IMR-90 (cell line): ENCODE measurements at regions of chr13 and their contacts with region 1.

Region 1: DNA sequence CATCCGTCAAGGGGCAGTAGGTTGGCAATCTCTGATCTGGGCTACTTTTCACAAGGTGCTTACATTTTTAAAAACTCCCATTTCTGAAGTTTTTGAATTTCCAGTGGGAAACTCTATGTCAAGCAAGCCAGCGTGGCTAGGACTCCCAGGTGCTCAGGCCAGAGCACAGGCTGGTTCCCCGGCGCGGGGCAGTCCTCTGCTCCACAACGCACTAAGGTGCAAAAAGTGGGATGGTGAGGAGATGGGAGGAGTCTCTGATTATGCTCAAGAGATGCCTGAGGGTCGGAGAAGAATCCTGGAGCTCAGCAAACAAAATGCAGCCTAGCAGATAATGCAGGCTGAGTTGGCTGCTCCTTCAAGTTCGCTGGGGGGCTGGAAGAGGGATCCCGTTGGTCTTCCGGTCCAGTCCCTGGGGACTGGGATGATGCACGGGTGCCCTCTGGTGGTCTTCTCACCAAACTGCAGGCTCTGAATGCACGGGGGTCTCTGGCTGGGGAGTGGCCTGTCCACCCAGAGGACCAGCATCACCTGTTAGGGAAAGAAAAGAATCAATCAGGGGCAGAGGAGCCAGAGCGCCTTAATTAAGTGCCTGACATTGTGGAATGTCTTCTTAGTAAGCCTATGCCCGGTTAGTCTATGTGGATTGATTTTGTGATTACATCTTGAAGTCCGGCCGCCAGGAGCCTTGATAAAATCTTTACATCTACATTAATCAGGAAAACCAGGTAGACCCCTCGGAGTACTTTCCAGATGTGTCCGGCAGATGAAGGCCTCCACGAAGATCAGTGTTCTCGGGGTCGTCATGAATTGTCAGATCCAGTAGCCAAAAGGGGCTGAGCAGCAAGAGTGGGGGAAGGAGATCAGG is 244.4 kb upstream of the MAB21L1 start:
- DNase-seq: peak; percentile 46
- ATAC-seq: peak; percentile 87
- H3K4me3 ChIP-seq: no peak overlapping the region; the same call in 1 of the 2 replicates
- H3K27ac ChIP-seq: no peak overlapping the region
- H3K4me1 ChIP-seq: peaks cover 10% of the 10 kb centered on the region
- H3K27me3 ChIP-seq: no peaks in the 10 kb centered on the region
- CTCF ChIP-seq: peak; percentile 95
- POLR2A ChIP-seq: no peak
- RAD21 ChIP-seq: peak; percentile 97

Region 2: GRCh38 chr13:35164324-35164932 is 556.5 kb before region 1 on chr13:
- CTCF ChIA-PET with region 1: no interaction called
- POLR2A ChIA-PET with region 1: no interaction called
- dilution Hi-C with region 1: no loop called
- in situ Hi-C with region 1: no loop called
- intact Hi-C with region 1: loop called (anchors 1 kb)
- DNase-seq: peak; percentile 27
- ATAC-seq: peak; percentile 78
- H3K4me3 ChIP-seq: no peak overlapping the region
- H3K27ac ChIP-seq: no peak overlapping the region
- H3K4me1 ChIP-seq: no peaks in the 10 kb centered on the region
- H3K27me3 ChIP-seq: no peaks in the 10 kb centered on the region
- CTCF ChIP-seq: peak; percentile 61
- POLR2A ChIP-seq: 0 out of 2 replicates have a peak, but pooled peaks have one; percentile 17
- RAD21 ChIP-seq: peak; percentile 70

Region 3: DNA sequence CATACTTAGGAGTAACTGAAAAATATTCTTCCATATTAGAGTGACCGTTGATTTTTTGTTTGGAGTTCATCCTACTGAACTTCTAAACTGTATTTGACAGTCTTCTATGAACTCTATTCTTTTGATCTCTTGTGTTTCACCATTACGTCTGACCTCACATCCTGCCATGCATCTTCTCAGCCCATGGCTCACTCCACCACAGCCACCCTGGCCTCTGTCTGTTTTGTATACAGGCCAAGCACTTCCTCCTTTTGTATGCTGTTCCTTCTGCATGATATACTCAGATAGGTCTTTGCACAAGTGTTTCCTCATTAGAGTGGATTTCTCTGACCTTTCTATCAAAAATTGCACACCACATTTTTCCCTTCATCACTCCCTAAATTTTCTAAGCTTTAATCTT is 364.4 kb before region 1 on chr13:
- CTCF ChIA-PET with region 1: no interaction called
- POLR2A ChIA-PET with region 1: no interaction called
- dilution Hi-C with region 1: no loop called
- in situ Hi-C with region 1: no loop called
- intact Hi-C with region 1: no loop called
- DNase-seq: no peak
- ATAC-seq: no peak
- H3K4me3 ChIP-seq: no peak overlapping the region
- H3K27ac ChIP-seq: no peak overlapping the region
- H3K4me1 ChIP-seq: no peaks in the 10 kb centered on the region
- H3K27me3 ChIP-seq: no peaks in the 10 kb centered on the region
- CTCF ChIP-seq: no peak
- POLR2A ChIP-seq: no peak
- RAD21 ChIP-seq: no peak

Region 4: GRCh38 chr13:35460061-35460460 is 260.9 kb before region 1 on chr13:
- CTCF ChIA-PET with region 1: no interaction called
- POLR2A ChIA-PET with region 1: no interaction called
- dilution Hi-C with region 1: no loop called
- in situ Hi-C with region 1: no loop called
- intact Hi-C with region 1: no loop called
- DNase-seq: no peak
- ATAC-seq: no peak
- H3K4me3 ChIP-seq: no peak overlapping the region
- H3K27ac ChIP-seq: no peak overlapping the region
- H3K4me1 ChIP-seq: no peaks in the 10 kb centered on the region
- H3K27me3 ChIP-seq: no peaks in the 10 kb centered on the region
- CTCF ChIP-seq: no peak
- POLR2A ChIP-seq: no peak
- RAD21 ChIP-seq: no peak

Region 5: GRCh38 chr13:35475960-35476943 is 244.7 kb before region 1 on chr13 and contains the start of gene MAB21L1:
- CTCF ChIA-PET with region 1: no interaction called
- POLR2A ChIA-PET with region 1: no interaction called
- dilution Hi-C with region 1: no loop called
- in situ Hi-C with region 1: no loop called
- intact Hi-C with region 1: loop called (anchors 10 kb)
- DNase-seq: peak; percentile 19
- ATAC-seq: peak; percentile 69
- H3K4me3 ChIP-seq: peak within 1 kb of the TSS; percentile 43
- H3K27ac ChIP-seq: no peak within 1 kb of the TSS
- H3K4me1 ChIP-seq: no peaks in the 10 kb centered on the region
- H3K27me3 ChIP-seq: peaks cover 54% of the 10 kb centered on the region
- CTCF ChIP-seq: no peak
- POLR2A ChIP-seq: no peak
- RAD21 ChIP-seq: no peak
- total RNA-seq, gene MAB21L1: 0.72 and 0.83 TPM in 2 replicates

Region 6: DNA sequence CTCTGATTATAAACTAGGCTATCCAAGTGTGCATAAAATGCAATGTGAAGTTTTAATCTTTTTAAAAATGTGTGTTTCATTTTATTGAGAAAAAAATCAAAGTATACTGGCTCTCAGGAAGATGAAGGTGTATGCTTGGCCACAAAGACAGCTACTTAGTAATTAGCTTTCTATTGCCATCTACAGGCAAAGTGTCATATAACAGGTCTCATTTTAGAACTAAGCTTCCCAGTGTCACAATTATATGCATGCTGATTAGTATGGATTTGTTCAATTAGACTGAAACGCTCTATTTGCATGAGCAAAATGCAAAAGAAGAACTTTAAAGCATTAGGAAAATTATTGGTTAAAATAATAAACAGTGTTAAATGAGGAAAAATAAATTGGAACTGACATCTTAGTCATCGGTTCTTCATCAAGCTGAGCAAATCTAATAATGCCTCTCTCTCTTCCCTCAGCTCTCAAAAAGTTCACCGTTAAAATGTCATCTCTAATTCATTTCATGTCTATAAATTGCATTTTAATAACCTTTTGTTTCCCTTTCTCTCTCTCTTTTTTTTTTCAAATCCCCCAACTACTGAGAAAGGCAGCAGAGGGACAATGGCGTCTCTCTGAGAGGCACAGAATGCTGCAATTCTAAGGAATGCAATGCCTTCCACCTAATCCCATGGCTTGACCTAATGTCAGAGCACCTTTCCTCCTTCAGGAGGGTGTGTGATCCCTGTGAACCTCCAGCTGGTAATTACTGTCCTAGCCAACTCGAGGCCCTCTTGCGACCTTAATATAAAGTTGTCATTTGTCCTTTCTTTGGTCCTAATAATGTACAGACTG is 68.6 kb after region 1 on chr13:
- CTCF ChIA-PET with region 1: interaction called, 25 read pairs
- POLR2A ChIA-PET with region 1: interaction called, 3 read pairs
- dilution Hi-C with region 1: no loop called
- in situ Hi-C with region 1: no loop called
- intact Hi-C with region 1: loop called (anchors 1 kb)
- DNase-seq: peak; percentile 61
- ATAC-seq: peak; percentile 86
- H3K4me3 ChIP-seq: no peak overlapping the region
- H3K27ac ChIP-seq: no peak overlapping the region
- H3K4me1 ChIP-seq: peaks cover 2% of the 10 kb centered on the region; the same call in 1 of the 2 replicates
- H3K27me3 ChIP-seq: no peaks in the 10 kb centered on the region
- CTCF ChIP-seq: peak; percentile 66
- POLR2A ChIP-seq: no peak
- RAD21 ChIP-seq: peak; percentile 70

Region 7: GRCh38 chr13:35953537-35954206 is 232.8 kb after region 1 on chr13:
- CTCF ChIA-PET with region 1: no interaction called
- POLR2A ChIA-PET with region 1: no interaction called
- dilution Hi-C with region 1: no loop called
- in situ Hi-C with region 1: loop called (anchors 10 kb)
- intact Hi-C with region 1: loop called (anchors 1 kb)
- DNase-seq: peak; percentile 94
- ATAC-seq: peak; percentile 98
- H3K4me3 ChIP-seq: no peak overlapping the region
- H3K27ac ChIP-seq: no peak overlapping the region
- H3K4me1 ChIP-seq: no peaks in the 10 kb centered on the region
- H3K27me3 ChIP-seq: no peaks in the 10 kb centered on the region; the same call in 1 of the 2 replicates
- CTCF ChIP-seq: peak; percentile 82
- POLR2A ChIP-seq: no peak
- RAD21 ChIP-seq: peak; percentile 77

Region 8: DNA sequence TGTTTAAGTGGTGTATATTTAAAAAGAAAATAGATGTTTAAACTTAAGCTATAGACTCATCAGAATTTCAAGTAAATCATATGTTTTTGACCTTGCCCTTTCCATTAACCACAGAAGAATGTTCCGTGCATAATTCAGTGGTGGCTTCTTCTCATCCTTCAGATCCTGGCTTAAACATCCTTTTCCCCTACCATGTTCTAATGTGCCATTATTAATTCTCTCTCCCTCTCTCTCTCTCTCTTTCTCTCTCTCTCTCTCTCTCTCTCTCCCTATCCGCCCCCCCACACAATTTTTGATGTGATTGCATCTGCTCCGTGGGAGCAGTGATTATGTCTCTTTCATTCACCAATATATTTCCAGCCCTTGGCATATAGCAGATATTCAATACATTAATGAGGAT is 293.8 kb after region 1 on chr13:
- CTCF ChIA-PET with region 1: no interaction called
- POLR2A ChIA-PET with region 1: no interaction called
- dilution Hi-C with region 1: no loop called
- in situ Hi-C with region 1: no loop called
- intact Hi-C with region 1: no loop called
- DNase-seq: no peak
- ATAC-seq: no peak
- H3K4me3 ChIP-seq: no peak overlapping the region
- H3K27ac ChIP-seq: no peak overlapping the region
- H3K4me1 ChIP-seq: no peaks in the 10 kb centered on the region
- H3K27me3 ChIP-seq: no peaks in the 10 kb centered on the region
- CTCF ChIP-seq: no peak
- POLR2A ChIP-seq: no peak
- RAD21 ChIP-seq: no peak